Dorsolateral prefrontal cortex (tissue), 120 donors: ENCODE measurements at regions of chr14 and their contacts with region 1.

Region 1: DNA sequence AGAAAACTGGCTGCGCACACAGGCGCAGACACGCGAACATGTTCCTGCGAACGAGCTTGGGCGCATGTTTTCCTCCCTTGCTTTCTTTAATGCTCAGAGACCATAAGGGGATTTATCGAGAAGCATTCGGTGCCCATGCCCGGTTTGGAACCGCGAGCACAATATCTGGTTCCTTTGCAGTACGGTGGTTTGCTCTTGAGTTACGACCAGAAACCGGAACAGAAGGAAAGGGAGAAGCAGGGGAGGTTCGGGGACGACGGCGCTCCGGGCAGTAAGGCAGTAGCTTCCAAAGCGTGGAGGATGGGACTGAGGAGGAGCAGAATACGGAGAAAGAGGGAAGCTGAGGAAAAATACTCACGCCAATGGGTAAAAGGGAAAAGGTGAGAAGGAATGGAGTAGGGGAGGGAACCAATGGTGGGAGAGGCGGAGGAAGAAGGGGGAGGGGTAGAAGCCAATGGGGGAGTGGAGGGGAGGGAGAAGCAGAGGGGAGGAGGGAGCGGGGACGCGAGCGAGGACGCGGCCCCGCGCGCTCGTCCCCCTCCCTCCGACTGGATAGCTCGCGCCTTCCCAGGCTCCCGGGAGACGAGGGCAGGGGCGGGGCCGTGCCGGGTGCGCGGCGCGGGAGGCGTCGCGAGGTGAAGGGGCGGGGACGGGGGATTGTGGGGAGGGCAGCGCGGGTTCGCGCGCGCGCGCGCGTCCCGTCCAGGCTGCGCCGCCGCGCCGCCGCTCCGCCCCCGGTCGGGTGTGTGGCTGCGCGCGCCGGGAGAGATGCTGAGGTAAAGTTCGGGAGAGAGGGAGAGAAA is 625 bp upstream of the ARHGAP5 start:
- DNase-seq: peak; percentile 86 to 97 (median 94)
- H3K4me3 ChIP-seq: peak overlapping the region; percentile 77 to 99 (median 92)
- H3K27ac ChIP-seq: peak overlapping the region; percentile 92 to 100 (median 99)
- H3K27me3 ChIP-seq: no peaks in the 10 kb centered on the region
- CTCF ChIP-seq: peak in 2 of 56 donors; percentile 6 to 8

Region 2: GRCh38 chr14:31456841-31457664 is 619.4 kb before region 1 on chr14 and contains the start of gene DTD2:
- intact Hi-C with region 1: loop called (anchors 5 to 10 kb)
- DNase-seq: peak; percentile 94 to 97 (median 96)
- H3K4me3 ChIP-seq: peak within 1 kb of the TSS; percentile 56 to 98 (median 82)
- H3K27ac ChIP-seq: peak within 1 kb of the TSS; percentile 70 to 98 (median 93)
- H3K27me3 ChIP-seq: no peaks in the 10 kb centered on the region
- CTCF ChIP-seq: peak in 38 of 56 donors; percentile 4 to 59 (median 28)
- total RNA-seq, gene DTD2: 11.4 to 33.1 (median 22.2) TPM

Region 3: GRCh38 chr14:31937721-31938346 is 138.6 kb before region 1 on chr14:
- intact Hi-C with region 1: loop called in 1 of 2 experiments (anchors 10 kb)
- DNase-seq: peak in 5 of 10 donors; percentile 41 to 76 (median 64)
- H3K4me3 ChIP-seq: no peak overlapping the region
- H3K27ac ChIP-seq: no peak overlapping the region
- H3K27me3 ChIP-seq: no peaks in the 10 kb centered on the region
- CTCF ChIP-seq: no peak

Region 4: DNA sequence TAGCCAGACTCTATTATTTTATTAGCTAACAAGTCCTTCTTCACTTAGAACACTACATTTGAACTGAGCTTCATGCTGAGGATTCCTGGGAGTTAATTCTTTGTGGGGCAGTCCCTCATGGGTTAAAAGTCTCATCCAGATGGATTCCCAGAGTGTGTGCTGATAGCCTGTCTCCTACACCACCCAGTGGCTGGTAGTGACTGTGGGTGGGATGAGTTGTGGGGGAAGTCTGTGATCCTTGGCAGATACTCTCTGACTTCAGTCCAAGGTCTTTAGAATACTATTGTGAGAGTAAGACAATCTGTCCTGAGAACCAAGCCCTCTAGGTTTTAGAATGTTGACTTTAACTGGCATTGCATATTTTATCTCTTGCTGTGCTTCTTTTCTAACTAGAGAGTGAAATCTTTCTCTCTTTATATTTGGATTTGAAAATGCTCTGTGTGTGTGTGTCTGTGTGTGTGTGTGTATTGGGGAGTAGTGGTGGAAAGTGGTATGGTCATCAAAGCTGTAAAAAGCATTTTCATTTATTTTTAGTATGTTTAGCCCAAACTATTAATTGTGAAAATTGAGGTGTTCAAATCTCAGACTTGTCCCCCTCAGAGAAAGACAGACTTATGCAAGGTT is 289.9 kb after region 1 on chr14:
- intact Hi-C with region 1: loop called in 1 of 2 experiments (anchors 10 kb)
- DNase-seq: peak in 9 of 10 donors; percentile 22 to 74 (median 60)
- H3K4me3 ChIP-seq: peak overlapping the region in 20 of 59 donors; percentile 0 to 44 (median 14)
- H3K27ac ChIP-seq: peak overlapping the region; percentile 54 to 96 (median 88)
- H3K27me3 ChIP-seq: no peaks in the 10 kb centered on the region
- CTCF ChIP-seq: peak in 50 of 56 donors; percentile 13 to 75 (median 53)

Region 5: GRCh38 chr14:32509632-32510187 is 433.2 kb after region 1 on chr14:
- intact Hi-C with region 1: loop called (anchors 5 to 10 kb)
- DNase-seq: peak; percentile 23 to 91 (median 85)
- H3K4me3 ChIP-seq: peak overlapping the region in 49 of 59 donors; percentile 5 to 61 (median 37)
- H3K27ac ChIP-seq: peak overlapping the region; percentile 80 to 100 (median 99)
- H3K27me3 ChIP-seq: no peaks in the 10 kb centered on the region
- CTCF ChIP-seq: peak in 14 of 56 donors; percentile 4 to 38 (median 16)